Activated naive CD4-positive, alpha-beta T cell treated with anti-CD3 and anti-CD28 coated beads for 36 hours (primary cell): ENCODE measurements at regions of chr1 and their contacts with region 1.

Region 1: DNA sequence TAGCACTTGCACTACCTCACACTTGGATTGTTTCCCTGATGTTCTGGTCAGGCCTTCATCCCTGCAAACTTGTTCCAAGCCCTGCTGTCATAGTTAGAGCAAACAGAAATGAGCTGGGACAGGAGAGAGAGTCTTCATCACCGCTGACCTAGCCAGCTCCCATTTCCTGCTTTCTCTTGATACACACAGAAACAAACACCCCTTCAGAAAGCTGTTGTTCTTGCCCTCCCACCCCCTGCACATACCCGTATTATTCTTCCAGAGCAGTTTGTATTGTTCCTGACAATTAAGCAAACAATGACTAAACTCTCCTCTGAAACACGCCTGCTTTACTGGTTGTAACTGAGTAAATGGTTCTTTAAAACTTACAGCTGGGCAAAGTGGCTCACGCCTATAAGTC is 2.9 kb upstream of the SYT2 start:
- DNase-seq: no peak
- H3K4me3 Mint-ChIP-seq: no peak overlapping the region
- H3K27ac Mint-ChIP-seq: no peak overlapping the region
- H3K4me1 Mint-ChIP-seq: peaks cover 4% of the 10 kb centered on the region
- H3K27me3 Mint-ChIP-seq: peaks cover 29% of the 10 kb centered on the region

Region 2: GRCh38 chr1:202192770-202193613 is 520.1 kb before region 1 on chr1:
- CTCF ChIA-PET with region 1: interaction called, 5 read pairs
- intact Hi-C with region 1: loop called (anchors 2 kb)
- DNase-seq: peak; percentile 71
- H3K4me3 Mint-ChIP-seq: no peak overlapping the region
- H3K27ac Mint-ChIP-seq: no peak overlapping the region
- H3K4me1 Mint-ChIP-seq: peaks cover 2% of the 10 kb centered on the region
- H3K27me3 Mint-ChIP-seq: peaks cover 25% of the 10 kb centered on the region

Region 3: GRCh38 chr1:202462342-202463076 is 250.6 kb before region 1 on chr1:
- CTCF ChIA-PET with region 1: interaction called, 3 read pairs
- intact Hi-C with region 1: loop called (anchors 5 kb)
- DNase-seq: no peak
- H3K4me3 Mint-ChIP-seq: no peak overlapping the region
- H3K27ac Mint-ChIP-seq: no peak overlapping the region
- H3K4me1 Mint-ChIP-seq: no peaks in the 10 kb centered on the region
- H3K27me3 Mint-ChIP-seq: no peaks in the 10 kb centered on the region

Region 4: GRCh38 chr1:202571347-202572339 is 141.5 kb before region 1 on chr1:
- CTCF ChIA-PET with region 1: interaction called, 10 read pairs
- intact Hi-C with region 1: no loop called
- DNase-seq: peak; percentile 56
- H3K4me3 Mint-ChIP-seq: no peak overlapping the region
- H3K27ac Mint-ChIP-seq: no peak overlapping the region
- H3K4me1 Mint-ChIP-seq: peaks cover 3% of the 10 kb centered on the region
- H3K27me3 Mint-ChIP-seq: no peaks in the 10 kb centered on the region

Region 5: DNA sequence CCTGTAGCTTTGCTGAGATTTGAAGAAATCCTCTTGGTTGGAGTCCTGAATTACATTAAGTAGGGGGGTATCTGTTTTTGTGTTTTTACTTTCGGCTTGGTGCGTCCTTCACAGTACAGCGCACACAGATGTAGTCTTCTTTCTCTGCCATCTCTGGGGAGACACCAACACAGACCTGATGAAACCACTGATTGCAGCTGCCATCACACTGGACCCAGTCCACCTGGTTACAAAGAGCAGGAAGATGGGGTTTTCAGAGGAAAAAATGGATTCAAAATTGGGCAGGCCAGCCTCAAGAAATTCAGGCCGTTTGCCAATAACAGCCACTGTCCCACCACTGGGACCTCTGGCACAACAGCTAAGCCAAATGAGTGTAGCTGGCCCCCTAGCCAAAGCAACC is 15.8 kb after region 1 on chr1:
- CTCF ChIA-PET with region 1: interaction called, 16 read pairs
- intact Hi-C with region 1: no loop called
- DNase-seq: no peak
- H3K4me3 Mint-ChIP-seq: no peak overlapping the region
- H3K27ac Mint-ChIP-seq: no peak overlapping the region
- H3K4me1 Mint-ChIP-seq: no peaks in the 10 kb centered on the region
- H3K27me3 Mint-ChIP-seq: no peaks in the 10 kb centered on the region